Naive thymus-derived CD4-positive, alpha-beta T cell (primary cell): ENCODE measurements at regions of chr12 and their contacts with region 1.

Region 1: DNA sequence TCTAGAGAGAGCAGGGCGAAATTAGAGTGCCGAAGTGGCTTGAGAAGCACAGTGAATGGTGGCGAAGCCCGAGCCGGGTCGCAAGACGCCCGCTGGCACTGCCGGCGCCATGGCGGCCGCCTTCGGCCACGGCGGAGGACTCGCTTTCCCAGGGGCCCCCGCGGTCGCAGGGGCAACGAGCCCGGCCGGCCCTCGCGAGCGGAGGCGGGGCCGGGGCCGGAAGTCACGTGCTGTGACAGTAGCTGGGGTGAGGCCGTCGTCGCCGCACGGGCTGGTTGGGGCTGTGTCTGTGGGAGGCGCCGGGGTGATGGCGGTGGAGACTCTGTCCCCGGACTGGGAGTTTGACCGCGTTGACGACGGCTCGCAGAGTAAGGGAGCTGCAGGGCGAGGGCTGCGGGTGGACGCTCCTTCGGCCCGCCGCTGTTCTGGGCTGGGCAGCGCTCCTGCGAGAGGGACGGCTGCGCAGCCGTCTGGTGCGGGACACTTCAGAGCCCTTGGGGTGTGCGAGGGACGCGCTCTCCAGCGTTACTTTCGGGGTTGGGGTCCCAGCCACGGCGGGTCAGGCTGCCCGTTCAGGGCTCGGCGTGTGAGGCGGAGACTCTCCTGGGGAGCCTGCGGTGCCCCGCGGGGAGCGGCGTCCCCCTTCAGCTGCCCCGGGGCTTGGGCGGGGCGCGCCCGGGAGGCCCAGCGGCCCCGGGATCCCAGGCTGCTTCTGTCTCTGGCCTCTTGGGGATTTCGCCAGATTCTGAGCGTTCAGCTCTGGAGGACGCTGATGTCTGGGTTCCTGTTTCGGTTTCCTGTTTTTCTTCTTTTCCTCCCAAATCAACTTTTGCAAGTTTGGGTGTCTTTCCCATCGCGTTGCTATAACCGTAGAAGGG is at the start of gene WASHC4:
- DNase-seq: peak; percentile 87 to 97 (median 90)
- ATAC-seq: peak; percentile 99
- H3K4me3 ChIP-seq: peak within 1 kb of the TSS; percentile 68
- H3K4me3 Mint-ChIP-seq: peak within 1 kb of the TSS; percentile 89 to 99 (median 96)
- H3K27ac ChIP-seq: peak within 1 kb of the TSS; percentile 93
- H3K27ac Mint-ChIP-seq: peak within 1 kb of the TSS; percentile 77 to 96 (median 95)
- H3K4me1 ChIP-seq: peaks cover 13 to 16% of the 10 kb centered on the region in 2 donors
- H3K4me1 Mint-ChIP-seq: peaks cover 20 to 45% (median 38%) of the 10 kb centered on the region in 7 donors
- H3K27me3 ChIP-seq: no peaks in the 10 kb centered on the region
- H3K27me3 Mint-ChIP-seq: peaks cover 3 to 27% (median 22%) of the 10 kb centered on the region in 5 donors
- total RNA-seq, gene WASHC4: 43.2 to 76.8 (median 53.0) TPM

Region 2: GRCh38 chr12:103965590-103966504 is 1141.9 kb before region 1 on chr12 and contains the start of gene TDG:
- CTCF ChIA-PET with region 1: no interaction called
- POLR2A ChIA-PET with region 1: interaction called, 4 read pairs
- intact Hi-C with region 1: loop called in 1 of 2 experiments (anchors 1 kb)
- DNase-seq: peak; percentile 81 to 97 (median 95)
- ATAC-seq: peak; percentile 97
- H3K4me3 ChIP-seq: peak within 1 kb of the TSS; percentile 87
- H3K4me3 Mint-ChIP-seq: peak within 1 kb of the TSS; percentile 92 to 99 (median 97)
- H3K27ac ChIP-seq: peak within 1 kb of the TSS; percentile 94
- H3K27ac Mint-ChIP-seq: peak within 1 kb of the TSS; percentile 96 to 100 (median 99)
- H3K4me1 ChIP-seq: peaks cover 31 to 41% of the 10 kb centered on the region in 2 donors
- H3K4me1 Mint-ChIP-seq: peaks cover 34 to 68% (median 57%) of the 10 kb centered on the region in 7 donors
- H3K27me3 ChIP-seq: no peaks in the 10 kb centered on the region
- H3K27me3 Mint-ChIP-seq: no peaks in the 10 kb centered on the region
- total RNA-seq, gene TDG: 21.5 to 43.0 (median 35.5) TPM

Region 3: DNA sequence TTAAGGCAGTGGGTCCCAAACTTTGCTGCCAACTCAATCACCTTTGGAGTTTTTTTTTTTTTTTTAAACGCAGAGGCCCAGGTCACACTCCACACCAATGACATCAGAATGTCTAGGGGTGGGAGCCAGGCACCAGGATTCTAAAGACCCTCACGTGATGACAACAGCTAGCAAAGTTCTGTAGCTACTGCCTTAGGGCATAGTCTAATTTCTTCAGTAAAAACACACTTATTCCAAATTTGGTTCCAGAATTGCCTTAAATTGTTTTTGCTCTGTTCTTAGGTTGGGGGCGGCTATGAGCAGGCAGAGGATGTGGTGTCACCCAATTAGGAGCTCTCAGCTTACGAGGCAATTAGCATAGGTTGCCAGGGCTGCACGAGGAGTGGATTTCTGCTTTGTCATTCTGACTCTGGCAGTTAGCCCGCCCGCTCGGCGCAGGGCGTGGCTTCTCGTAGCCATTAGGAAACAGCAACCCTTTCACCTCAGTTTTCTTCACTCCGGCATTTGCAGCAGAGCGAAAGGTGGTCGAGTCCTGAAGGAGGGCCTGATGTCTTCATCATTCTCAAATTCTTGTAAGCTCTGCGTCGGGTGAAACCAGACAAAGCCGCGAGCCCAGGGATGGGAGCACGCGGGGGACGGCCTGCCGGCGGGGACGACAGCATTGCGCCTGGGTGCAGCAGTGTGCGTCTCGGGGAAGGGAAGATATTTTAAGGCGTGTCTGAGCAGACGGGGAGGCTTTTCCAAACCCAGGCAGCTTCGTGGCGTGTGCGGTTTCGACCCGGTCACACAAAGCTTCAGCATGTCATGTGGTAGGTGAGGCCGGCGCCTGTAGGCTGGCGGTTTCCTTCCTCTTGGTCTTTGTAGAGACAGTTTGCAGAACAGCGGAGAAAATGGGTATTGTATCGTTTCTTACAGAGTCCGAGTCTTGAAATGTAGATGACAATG is 820.9 kb before region 1 on chr12:
- CTCF ChIA-PET with region 1: no interaction called
- POLR2A ChIA-PET with region 1: interaction called, 3 read pairs
- intact Hi-C with region 1: loop called (anchors 1 to 2 kb)
- DNase-seq: peak; percentile 72 to 90 (median 87)
- ATAC-seq: peak; percentile 93
- H3K4me3 ChIP-seq: peak overlapping the region; percentile 73
- H3K4me3 Mint-ChIP-seq: peak overlapping the region; percentile 86 to 100 (median 98)
- H3K27ac ChIP-seq: peak overlapping the region; percentile 66
- H3K27ac Mint-ChIP-seq: peak overlapping the region; percentile 85 to 99 (median 94)
- H3K4me1 ChIP-seq: peaks cover 18 to 19% of the 10 kb centered on the region in 2 donors
- H3K4me1 Mint-ChIP-seq: peaks cover 14 to 40% (median 34%) of the 10 kb centered on the region in 7 donors
- H3K27me3 ChIP-seq: no peaks in the 10 kb centered on the region
- H3K27me3 Mint-ChIP-seq: peaks cover 0 to 1% (median 0%) of the 10 kb centered on the region in 5 donors

Region 4: DNA sequence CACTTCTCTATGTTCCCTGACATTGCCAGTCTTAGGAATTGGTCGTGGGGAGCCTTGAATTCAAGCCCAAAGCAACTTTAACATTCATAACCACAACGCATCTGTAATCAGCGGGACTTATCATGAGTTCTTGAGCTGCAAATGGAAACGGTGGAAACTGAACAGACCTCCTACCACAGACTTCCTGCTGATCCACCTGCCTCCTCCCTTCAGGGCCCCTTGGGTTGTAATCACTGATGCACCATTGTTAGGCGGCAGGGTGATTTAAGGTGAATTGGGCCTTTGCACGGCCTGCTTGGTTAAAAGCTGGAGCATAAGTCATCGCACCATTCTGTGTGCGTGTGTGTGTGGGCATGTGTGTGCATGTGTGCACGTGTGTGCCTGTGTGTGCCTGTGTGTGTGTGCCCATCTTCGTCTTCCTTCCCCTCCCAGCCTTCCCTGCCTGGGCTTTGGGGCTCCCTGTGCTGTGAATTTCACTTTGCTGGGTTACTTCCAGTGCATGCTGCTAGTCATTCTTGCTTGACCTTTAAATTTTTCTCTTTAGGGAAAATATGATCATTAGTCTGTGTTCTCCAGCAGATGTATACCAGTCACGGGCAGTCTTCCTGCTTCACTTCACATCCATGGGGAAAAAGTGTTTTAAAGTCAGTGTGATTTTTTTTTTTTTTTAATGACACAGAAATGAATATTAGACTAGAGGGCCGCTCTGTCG is 621.9 kb before region 1 on chr12:
- CTCF ChIA-PET with region 1: no interaction called
- POLR2A ChIA-PET with region 1: no interaction called
- intact Hi-C with region 1: loop called in 1 of 2 experiments (anchors 5 kb)
- DNase-seq: peak in 7 of 9 donors; percentile 58 to 78 (median 69)
- ATAC-seq: peak; percentile 80
- H3K4me3 ChIP-seq: peak overlapping the region; percentile 39
- H3K4me3 Mint-ChIP-seq: peak overlapping the region; percentile 59 to 84 (median 72)
- H3K27ac ChIP-seq: peak overlapping the region; percentile 22
- H3K27ac Mint-ChIP-seq: peak overlapping the region; percentile 73 to 93 (median 90)
- H3K4me1 ChIP-seq: peaks cover 68 to 79% of the 10 kb centered on the region in 2 donors
- H3K4me1 Mint-ChIP-seq: peaks cover 70 to 97% (median 90%) of the 10 kb centered on the region in 7 donors
- H3K27me3 ChIP-seq: no peaks in the 10 kb centered on the region
- H3K27me3 Mint-ChIP-seq: no peaks in the 10 kb centered on the region

Region 5: DNA sequence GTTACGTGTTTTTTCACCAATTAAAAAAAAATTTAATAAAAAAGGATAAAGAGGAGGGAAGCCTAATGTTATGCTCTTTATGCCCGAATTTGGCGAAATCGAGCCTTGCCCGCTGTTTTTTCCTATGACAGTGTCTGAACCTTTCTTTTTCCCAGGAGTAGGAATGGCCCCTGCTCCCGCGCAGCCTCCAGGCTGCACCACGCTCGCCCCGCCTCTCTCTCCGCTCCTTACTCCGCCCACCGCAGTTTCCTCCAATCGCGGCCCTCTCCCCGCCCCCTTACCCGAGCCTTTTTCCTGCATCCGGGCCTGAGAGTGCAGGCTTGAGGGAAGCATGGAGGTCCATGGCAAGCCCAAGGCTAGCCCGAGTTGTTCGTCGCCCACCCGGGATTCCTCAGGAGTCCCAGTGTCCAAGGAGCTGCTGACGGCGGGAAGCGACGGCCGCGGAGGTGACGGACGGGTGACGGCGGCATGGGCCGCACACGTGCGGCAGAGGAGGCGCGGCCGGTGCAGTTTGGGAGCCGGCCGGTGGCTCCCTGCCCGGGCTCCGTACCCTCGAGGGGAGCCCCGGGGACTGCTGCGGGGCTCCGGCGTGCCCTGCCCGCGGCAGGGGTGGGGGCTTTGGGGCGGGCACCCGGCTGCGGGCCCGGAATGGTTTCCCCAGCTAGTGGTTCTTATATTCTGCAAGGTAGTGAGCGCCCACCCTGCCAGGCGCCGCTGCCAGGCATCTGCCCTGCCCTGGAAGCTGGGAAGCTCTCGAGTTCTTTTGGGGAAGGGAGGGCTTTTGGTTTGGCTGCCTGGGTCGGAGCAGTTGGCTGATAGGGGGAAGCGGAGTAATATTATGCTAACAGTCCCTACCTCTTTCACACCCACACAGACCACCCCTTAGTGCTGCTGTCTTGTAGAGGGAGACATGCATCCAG is 121.5 kb before region 1 on chr12 and contains the start of gene NOPCHAP1:
- CTCF ChIA-PET with region 1: no interaction called
- POLR2A ChIA-PET with region 1: no interaction called
- intact Hi-C with region 1: loop called (anchors 1 kb)
- DNase-seq: peak; percentile 64 to 84 (median 78)
- ATAC-seq: peak; percentile 100
- H3K4me3 ChIP-seq: peak within 1 kb of the TSS; percentile 91
- H3K4me3 Mint-ChIP-seq: peak within 1 kb of the TSS; percentile 90 to 95 (median 94)
- H3K27ac ChIP-seq: peak within 1 kb of the TSS; percentile 73
- H3K27ac Mint-ChIP-seq: peak within 1 kb of the TSS; percentile 63 to 87 (median 74)
- H3K4me1 ChIP-seq: peaks cover 12 to 13% of the 10 kb centered on the region in 2 donors
- H3K4me1 Mint-ChIP-seq: peaks cover 19 to 47% (median 37%) of the 10 kb centered on the region in 7 donors
- H3K27me3 ChIP-seq: no peaks in the 10 kb centered on the region
- H3K27me3 Mint-ChIP-seq: peaks cover 0 to 13% (median 5%) of the 10 kb centered on the region in 5 donors
- total RNA-seq, gene NOPCHAP1: 10.5 to 18.0 (median 15.2) TPM

Region 6: DNA sequence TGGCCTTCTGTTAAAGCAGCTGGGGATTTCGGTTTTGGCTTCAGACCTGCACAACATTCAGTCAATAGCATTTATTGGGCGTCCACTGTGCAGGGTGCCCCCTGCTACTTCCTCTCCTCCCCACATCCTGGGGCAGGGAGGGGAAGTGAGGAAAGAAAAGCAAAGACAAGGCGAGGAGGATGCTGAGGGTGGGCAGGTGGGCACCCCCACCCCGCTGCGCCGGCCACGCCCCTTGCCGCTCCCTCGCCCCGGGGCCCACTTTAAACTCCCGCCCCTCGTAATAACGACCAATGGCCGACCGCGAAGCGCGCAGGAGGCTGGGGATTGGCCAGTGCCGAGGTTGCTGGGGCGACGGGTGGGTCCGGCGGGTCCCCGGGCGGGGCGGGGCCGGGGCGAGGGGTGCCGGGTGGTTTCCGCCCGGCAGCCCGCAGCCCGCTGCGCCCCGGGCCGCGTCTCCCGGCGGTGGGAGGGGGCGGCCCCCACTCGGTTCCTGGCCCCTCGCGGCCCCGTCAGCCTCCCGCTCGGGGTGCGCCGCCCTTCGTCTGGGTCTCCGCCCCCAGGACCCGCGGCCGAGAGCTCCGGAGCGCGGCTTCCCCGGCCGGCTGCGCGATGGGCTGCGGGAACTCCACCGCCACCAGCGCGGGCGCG is 222.7 kb after region 1 on chr12 and contains the start of gene C12orf75:
- CTCF ChIA-PET with region 1: no interaction called
- POLR2A ChIA-PET with region 1: no interaction called
- intact Hi-C with region 1: loop called (anchors 1 to 2 kb)
- DNase-seq: peak; percentile 62 to 94 (median 72)
- ATAC-seq: peak; percentile 91
- H3K4me3 ChIP-seq: peak within 1 kb of the TSS; percentile 56
- H3K4me3 Mint-ChIP-seq: peak within 1 kb of the TSS; percentile 82 to 94 (median 90)
- H3K27ac ChIP-seq: peak within 1 kb of the TSS; percentile 64
- H3K27ac Mint-ChIP-seq: peak within 1 kb of the TSS; percentile 65 to 95 (median 86)
- H3K4me1 ChIP-seq: peaks cover 12 to 57% of the 10 kb centered on the region in 2 donors
- H3K4me1 Mint-ChIP-seq: peaks cover 16 to 74% (median 24%) of the 10 kb centered on the region in 7 donors
- H3K27me3 ChIP-seq: no peaks in the 10 kb centered on the region
- H3K27me3 Mint-ChIP-seq: no peaks in the 10 kb centered on the region
- total RNA-seq, gene C12orf75: 5.5 to 146 (median 13.0) TPM